ENCODE measurements at regions of chr9 and their contacts with region 1.

Region 1: DNA sequence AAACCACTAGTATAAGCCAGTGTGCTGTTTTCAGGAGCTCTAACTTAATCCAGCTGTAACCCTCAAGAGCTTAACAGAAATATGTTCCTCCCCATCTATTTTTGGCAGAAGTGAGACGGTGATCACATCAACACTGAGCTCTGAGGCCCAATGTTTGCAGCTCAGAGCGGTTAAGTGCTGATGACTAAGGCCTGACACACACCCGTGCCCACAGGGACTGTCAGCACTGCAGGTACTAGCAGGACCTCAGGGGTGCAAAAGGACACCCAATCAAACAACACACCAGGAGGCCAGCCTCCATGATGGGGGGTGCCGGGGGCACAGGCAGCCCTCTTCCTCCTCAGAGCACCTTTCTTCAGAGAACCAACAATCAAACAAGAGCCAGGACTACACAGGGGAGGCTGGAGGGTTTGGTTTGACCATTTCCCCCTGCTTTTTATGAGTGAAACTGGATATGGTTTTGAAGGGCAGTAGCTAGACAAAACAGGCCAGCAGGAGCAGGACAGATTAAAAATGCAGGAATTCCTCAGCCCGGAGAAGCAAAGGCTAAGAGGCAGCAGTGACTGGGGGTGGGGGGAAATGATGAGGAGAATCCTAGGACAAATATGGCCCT is 61.3 kb downstream of the RAPGEF1 start:
- DNase-seq: peak; percentile 80
- H3K4me3 ChIP-seq: no peak overlapping the region
- H3K27ac ChIP-seq: peak overlapping the region; percentile 96
- H3K4me1 ChIP-seq: peaks cover 56% of the 10 kb centered on the region
- H3K27me3 ChIP-seq: no peaks in the 10 kb centered on the region
- CTCF ChIP-seq: no peak
- POLR2A ChIP-seq: no peak

Region 2: GRCh38 chr9:131562032-131562959 is 116.3 kb before region 1 on chr9:
- CTCF ChIA-PET with region 1: no interaction called
- POLR2A ChIA-PET with region 1: no interaction called
- dilution Hi-C with region 1: no loop called
- intact Hi-C with region 1: no loop called
- DNase-seq: no peak
- H3K4me3 ChIP-seq: no peak overlapping the region
- H3K27ac ChIP-seq: no peak overlapping the region
- H3K4me1 ChIP-seq: no peaks in the 10 kb centered on the region
- H3K27me3 ChIP-seq: no peaks in the 10 kb centered on the region
- CTCF ChIP-seq: no peak
- POLR2A ChIP-seq: no peak

Region 3: DNA sequence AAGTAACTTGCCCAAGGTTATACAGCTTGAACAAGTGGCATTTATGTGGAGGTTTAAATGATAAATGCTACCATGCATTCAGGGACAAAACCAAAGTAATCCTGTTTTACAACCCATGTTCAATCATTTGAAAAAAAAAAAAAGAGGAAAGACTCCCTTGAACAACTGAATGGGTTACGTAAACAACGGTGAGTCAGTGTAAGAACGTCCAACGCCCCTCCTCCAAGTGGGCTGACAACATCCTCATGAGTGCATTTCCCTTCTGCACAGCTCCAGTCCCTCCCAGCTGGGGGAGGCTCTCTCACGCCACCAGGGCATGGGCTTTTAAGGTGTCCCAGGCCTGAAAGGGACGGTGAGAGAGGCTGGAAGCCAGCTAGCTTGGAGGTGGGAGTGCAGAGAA is 43.3 kb before region 1 on chr9:
- CTCF ChIA-PET with region 1: interaction called, 5 read pairs
- POLR2A ChIA-PET with region 1: interaction called, 4 read pairs
- dilution Hi-C with region 1: no loop called
- intact Hi-C with region 1: loop called (anchors 1 kb)
- DNase-seq: peak; percentile 99
- H3K4me3 ChIP-seq: no peak overlapping the region
- H3K27ac ChIP-seq: peak overlapping the region; percentile 93
- H3K4me1 ChIP-seq: peaks cover 24% of the 10 kb centered on the region
- H3K27me3 ChIP-seq: no peaks in the 10 kb centered on the region
- CTCF ChIP-seq: peak in 1 of 2 donors; percentile 11
- POLR2A ChIP-seq: no peak

Region 4: GRCh38 chr9:131697097-131697496 is 18.5 kb after region 1 on chr9:
- CTCF ChIA-PET with region 1: interaction called, 10 read pairs
- POLR2A ChIA-PET with region 1: interaction called, 3 read pairs
- dilution Hi-C with region 1: no loop called
- intact Hi-C with region 1: no loop called
- DNase-seq: no peak
- H3K4me3 ChIP-seq: no peak overlapping the region
- H3K27ac ChIP-seq: no peak overlapping the region
- H3K4me1 ChIP-seq: peaks cover 14% of the 10 kb centered on the region
- H3K27me3 ChIP-seq: no peaks in the 10 kb centered on the region
- CTCF ChIP-seq: peak in 1 of 2 donors; percentile 3
- POLR2A ChIP-seq: no peak

Region 5: DNA sequence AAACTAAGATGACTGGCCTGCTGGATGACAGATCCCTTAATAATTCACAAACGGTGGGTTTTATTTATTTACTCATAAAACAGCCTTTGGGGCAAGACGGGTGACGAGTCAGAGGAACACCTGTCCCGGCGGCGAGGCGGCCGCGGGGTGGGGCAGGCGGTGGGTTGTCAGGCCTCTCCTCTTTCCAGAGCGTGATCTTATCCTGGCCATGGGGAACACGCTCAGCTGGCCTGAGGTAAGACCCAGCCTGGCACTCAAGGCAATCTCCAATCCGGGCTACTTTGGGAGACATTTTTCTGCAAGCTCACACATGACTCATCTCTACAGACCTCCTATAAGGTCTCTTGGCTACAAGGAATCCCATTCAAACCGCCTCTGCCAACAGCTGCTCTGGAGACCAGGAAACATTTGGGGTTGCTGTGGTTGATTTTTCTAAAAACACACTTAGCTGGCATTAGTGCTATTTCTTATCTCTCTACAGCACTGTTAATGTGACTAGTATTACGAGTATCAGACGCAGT is 55.0 kb after region 1 on chr9:
- CTCF ChIA-PET with region 1: interaction called, 16 read pairs
- POLR2A ChIA-PET with region 1: interaction called, 4 read pairs
- dilution Hi-C with region 1: no loop called
- intact Hi-C with region 1: loop called (anchors 1 kb)
- DNase-seq: peak; percentile 97
- H3K4me3 ChIP-seq: no peak overlapping the region
- H3K27ac ChIP-seq: peak overlapping the region; percentile 87
- H3K4me1 ChIP-seq: peaks cover 81% of the 10 kb centered on the region
- H3K27me3 ChIP-seq: no peaks in the 10 kb centered on the region
- CTCF ChIP-seq: no peak
- POLR2A ChIP-seq: no peak

Region 6: GRCh38 chr9:131845305-131846298 is 167.0 kb after region 1 on chr9:
- CTCF ChIA-PET with region 1: no interaction called
- POLR2A ChIA-PET with region 1: no interaction called
- dilution Hi-C with region 1: no loop called
- intact Hi-C with region 1: no loop called
- DNase-seq: no peak
- H3K4me3 ChIP-seq: no peak overlapping the region
- H3K27ac ChIP-seq: no peak overlapping the region
- H3K4me1 ChIP-seq: no peaks in the 10 kb centered on the region
- H3K27me3 ChIP-seq: no peaks in the 10 kb centered on the region
- CTCF ChIP-seq: no peak
- POLR2A ChIP-seq: no peak

Region 7: GRCh38 chr9:132026932-132027585 is 348.5 kb after region 1 on chr9:
- CTCF ChIA-PET with region 1: no interaction called
- POLR2A ChIA-PET with region 1: no interaction called
- dilution Hi-C with region 1: no loop called
- intact Hi-C with region 1: no loop called
- DNase-seq: no peak
- H3K4me3 ChIP-seq: no peak overlapping the region
- H3K27ac ChIP-seq: no peak overlapping the region
- H3K4me1 ChIP-seq: no peaks in the 10 kb centered on the region
- H3K27me3 ChIP-seq: no peaks in the 10 kb centered on the region
- CTCF ChIP-seq: no peak
- POLR2A ChIP-seq: no peak